ENCODE measurements at regions of chr2 and their contacts with region 1.

Region 1: GRCh38 chr2:25606892-25607291 is 66.5 kb downstream of the DTNB start:
- DNase-seq: no peak
- ATAC-seq: no peak
- H3K4me3 Mint-ChIP-seq: no peak overlapping the region
- H3K27ac Mint-ChIP-seq: no peak overlapping the region
- H3K4me1 Mint-ChIP-seq: peaks cover 29% of the 10 kb centered on the region
- H3K27me3 Mint-ChIP-seq: no peaks in the 10 kb centered on the region
- CTCF ChIP-seq: no peak

Region 2: GRCh38 chr2:24382363-24383073 is 1224.4 kb before region 1 on chr2:
- CTCF ChIA-PET with region 1: no interaction called
- POLR2A ChIA-PET with region 1: no interaction called
- intact Hi-C with region 1: no loop called
- DNase-seq: peak; percentile 35
- ATAC-seq: peak; percentile 97
- H3K4me3 Mint-ChIP-seq: no peak overlapping the region
- H3K27ac Mint-ChIP-seq: no peak overlapping the region
- H3K4me1 Mint-ChIP-seq: peaks cover 2% of the 10 kb centered on the region
- H3K27me3 Mint-ChIP-seq: no peaks in the 10 kb centered on the region
- CTCF ChIP-seq: no peak

Region 3: DNA sequence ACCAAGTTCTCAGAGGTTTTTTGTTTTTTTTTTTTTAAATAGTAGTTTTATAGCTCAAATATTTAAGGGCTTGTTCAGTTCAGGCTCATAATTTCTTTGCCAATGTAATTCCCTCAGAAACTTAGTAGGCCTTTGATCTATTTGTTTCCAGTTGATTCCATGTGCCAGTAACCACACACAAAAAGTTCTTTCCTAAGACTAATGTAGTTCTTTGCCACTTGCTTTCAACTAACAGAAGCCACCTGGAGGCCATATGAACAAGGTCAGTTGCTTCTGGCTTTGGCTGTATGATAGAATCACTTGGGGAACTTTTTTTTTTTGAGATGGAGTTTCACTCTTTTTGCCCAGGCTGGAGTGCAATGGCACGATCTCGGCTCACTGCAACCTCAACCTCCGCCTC is 34.3 kb before region 1 on chr2:
- CTCF ChIA-PET with region 1: no interaction called
- POLR2A ChIA-PET with region 1: no interaction called
- intact Hi-C with region 1: no loop called
- DNase-seq: no peak
- ATAC-seq: no peak
- H3K4me3 Mint-ChIP-seq: no peak overlapping the region
- H3K27ac Mint-ChIP-seq: no peak overlapping the region
- H3K4me1 Mint-ChIP-seq: no peaks in the 10 kb centered on the region
- H3K27me3 Mint-ChIP-seq: no peaks in the 10 kb centered on the region
- CTCF ChIP-seq: no peak

Region 4: GRCh38 chr2:25664183-25664964 is 57.5 kb after region 1 on chr2:
- CTCF ChIA-PET with region 1: interaction called, 73 read pairs
- POLR2A ChIA-PET with region 1: no interaction called
- intact Hi-C with region 1: loop called (anchors 1 kb)
- DNase-seq: no peak
- ATAC-seq: peak; percentile 42
- H3K4me3 Mint-ChIP-seq: peak overlapping the region; percentile 20
- H3K27ac Mint-ChIP-seq: no peak overlapping the region
- H3K4me1 Mint-ChIP-seq: peaks cover 7% of the 10 kb centered on the region
- H3K27me3 Mint-ChIP-seq: no peaks in the 10 kb centered on the region
- CTCF ChIP-seq: no peak

Region 5: GRCh38 chr2:25673300-25674076 is 66.6 kb after region 1 on chr2 and contains the start of gene DTNB:
- CTCF ChIA-PET with region 1: interaction called, 5 read pairs
- POLR2A ChIA-PET with region 1: interaction called, 8 read pairs
- intact Hi-C with region 1: loop called (anchors 2 kb)
- DNase-seq: peak; percentile 83
- ATAC-seq: peak; percentile 79
- H3K4me3 Mint-ChIP-seq: peak within 1 kb of the TSS; percentile 88
- H3K27ac Mint-ChIP-seq: peak within 1 kb of the TSS; percentile 72
- H3K4me1 Mint-ChIP-seq: peaks cover 15% of the 10 kb centered on the region
- H3K27me3 Mint-ChIP-seq: no peaks in the 10 kb centered on the region
- CTCF ChIP-seq: no peak
- total RNA-seq, gene DTNB: 18.3 and 28.9 TPM in 2 replicates

Region 6: GRCh38 chr2:25700221-25700660 is 93.3 kb after region 1 on chr2:
- CTCF ChIA-PET with region 1: interaction called, 110 read pairs
- POLR2A ChIA-PET with region 1: no interaction called
- intact Hi-C with region 1: loop called (anchors 1 kb)
- DNase-seq: no peak
- ATAC-seq: peak; percentile 64
- H3K4me3 Mint-ChIP-seq: no peak overlapping the region
- H3K27ac Mint-ChIP-seq: no peak overlapping the region
- H3K4me1 Mint-ChIP-seq: no peaks in the 10 kb centered on the region
- H3K27me3 Mint-ChIP-seq: no peaks in the 10 kb centered on the region
- CTCF ChIP-seq: no peak

Region 7: GRCh38 chr2:26577434-26578112 is 970.7 kb after region 1 on chr2:
- CTCF ChIA-PET with region 1: no interaction called
- POLR2A ChIA-PET with region 1: no interaction called
- intact Hi-C with region 1: loop called (anchors 5 kb)
- DNase-seq: peak; percentile 49
- ATAC-seq: peak; percentile 84
- H3K4me3 Mint-ChIP-seq: no peak overlapping the region
- H3K27ac Mint-ChIP-seq: no peak overlapping the region
- H3K4me1 Mint-ChIP-seq: no peaks in the 10 kb centered on the region
- H3K27me3 Mint-ChIP-seq: peaks cover 30% of the 10 kb centered on the region
- CTCF ChIP-seq: no peak